ENCODE measurements at regions of chr2 and their contacts with region 1.

Region 1: GRCh38 chr2:148509288-148509902 is 135.2 kb upstream of the EPC2 start:
- DNase-seq: peak; percentile 87
- H3K4me3 Mint-ChIP-seq: peak overlapping the region; percentile 49
- H3K27ac Mint-ChIP-seq: peak overlapping the region; percentile 43
- H3K4me1 Mint-ChIP-seq: peaks cover 39% of the 10 kb centered on the region
- H3K27me3 Mint-ChIP-seq: no peaks in the 10 kb centered on the region

Region 2: DNA sequence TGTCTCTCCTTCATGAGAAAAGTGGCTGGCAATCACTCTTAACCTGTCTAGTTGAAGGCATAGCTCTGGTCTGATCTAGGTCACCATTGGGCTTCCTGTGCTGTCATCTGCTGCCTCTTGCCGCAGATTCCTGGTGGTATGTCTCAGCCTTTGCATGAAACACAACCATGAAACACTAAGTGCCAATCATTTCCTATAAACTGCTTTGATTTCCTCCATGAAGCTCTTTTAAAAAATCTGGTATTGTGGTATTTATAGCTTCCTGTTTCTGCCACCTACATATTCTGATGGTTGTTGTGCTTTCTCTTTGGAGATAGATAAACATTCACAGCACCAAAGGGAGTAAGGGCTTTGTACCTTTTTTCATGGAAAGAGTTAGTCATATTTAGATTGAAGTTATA is 15.1 kb after region 1 on chr2:
- CTCF ChIA-PET with region 1: interaction called, 54 read pairs
- POLR2A ChIA-PET with region 1: no interaction called
- DNase-seq: peak; percentile 84
- H3K4me3 Mint-ChIP-seq: no peak overlapping the region
- H3K27ac Mint-ChIP-seq: peak overlapping the region; percentile 84
- H3K4me1 Mint-ChIP-seq: peaks cover 71% of the 10 kb centered on the region
- H3K27me3 Mint-ChIP-seq: no peaks in the 10 kb centered on the region